GM12878 (cell line): ENCODE measurements at regions of chr6 and their contacts with region 1.

Region 1: DNA sequence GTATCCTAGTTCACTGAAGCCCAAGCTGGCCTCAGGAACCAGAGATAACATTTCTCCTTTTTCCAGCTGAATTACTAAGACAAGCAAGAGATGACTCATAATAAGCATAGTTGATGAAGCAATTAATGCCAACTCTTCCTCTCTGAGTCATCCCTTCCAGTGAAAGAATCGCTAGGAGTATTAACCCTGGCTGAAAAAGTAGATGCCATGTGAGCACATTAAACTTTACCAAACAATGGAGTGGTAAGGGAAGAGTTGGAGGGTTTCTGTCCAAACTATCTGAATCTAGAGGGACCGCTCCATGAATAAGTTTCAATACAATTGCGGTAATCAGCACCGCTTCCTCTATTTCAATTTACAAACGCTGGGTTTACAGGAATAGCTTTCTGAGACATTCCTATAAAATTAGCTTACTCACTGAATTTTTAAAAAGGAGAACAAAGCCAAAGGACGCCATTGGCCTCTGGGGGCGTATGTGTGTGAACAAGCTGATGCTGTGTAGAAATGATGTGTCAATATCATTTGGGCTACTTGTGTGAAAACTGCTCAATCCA is 48.3 kb downstream of the ATXN1 start:
- DNase-seq: no peak
- ATAC-seq: peak; percentile 71
- H3K4me3 ChIP-seq: no peak overlapping the region
- H3K27ac ChIP-seq: peak overlapping the region; percentile 40; the same call in 1 of the 2 replicates
- H3K4me1 ChIP-seq: peaks cover 18% of the 10 kb centered on the region
- H3K27me3 ChIP-seq: no peaks in the 10 kb centered on the region
- CTCF ChIP-seq: peak; percentile 25 to 56 (median 50)
- EP300 ChIP-seq: peak in 1 of 2 experiments; percentile 66; a peak in 1 of 4 replicates
- POLR2A ChIP-seq: no peak
- RAD21 ChIP-seq: peak; percentile 50

Region 2: DNA sequence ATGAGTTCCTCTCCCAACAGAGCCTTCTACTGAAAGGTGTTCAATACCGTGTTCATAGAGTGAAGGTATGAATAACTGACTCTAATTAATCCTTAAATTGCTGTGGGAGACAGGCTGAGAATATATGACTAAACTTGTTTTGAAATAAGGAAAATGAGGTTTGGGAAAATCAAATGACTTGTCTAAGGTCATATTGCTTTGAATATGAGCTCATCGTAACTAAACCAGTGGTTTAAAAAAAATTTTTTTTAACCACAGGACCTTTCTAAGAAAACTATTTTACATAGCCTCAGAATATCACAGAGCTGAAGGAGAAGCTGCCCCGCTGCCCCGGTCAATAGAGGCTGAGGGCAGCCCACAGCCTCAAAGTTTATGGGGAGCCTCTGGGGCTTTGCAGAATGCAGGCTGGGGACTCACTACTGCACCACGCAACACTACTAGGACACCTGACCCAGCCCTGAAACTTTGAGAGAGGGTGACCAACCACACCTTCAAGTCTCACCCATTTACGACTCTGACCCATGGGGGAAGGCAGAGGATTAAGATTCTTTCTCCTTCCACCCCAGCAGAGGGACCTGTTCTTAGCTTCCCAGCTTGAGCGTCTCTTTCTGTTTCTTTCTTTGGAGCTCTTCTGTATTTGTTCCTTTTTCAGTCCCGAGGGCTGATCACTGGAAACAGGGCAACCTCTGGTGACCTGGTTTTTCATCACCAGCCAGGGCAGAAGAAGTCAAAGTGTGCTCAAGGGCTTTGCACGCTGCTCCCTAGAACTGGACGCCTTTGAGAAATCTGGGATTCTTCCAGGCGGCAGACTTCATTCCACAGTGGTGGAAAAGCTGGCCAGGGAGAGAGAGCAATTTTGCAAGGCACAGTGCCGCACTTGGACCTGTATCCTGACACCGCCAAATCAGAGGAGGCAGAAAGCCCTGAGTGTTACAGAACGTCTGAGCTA is 171.9 kb before region 1 on chr6:
- CTCF ChIA-PET with region 1: no interaction called
- POLR2A ChIA-PET with region 1: no interaction called
- RAD21 ChIA-PET with region 1: interaction called, 10 read pairs
- SMC1A ChIA-PET with region 1: no interaction called
- in situ Hi-C with region 1: no loop called
- intact Hi-C with region 1: no loop called
- DNase-seq: no peak
- ATAC-seq: peak; percentile 93
- H3K4me3 ChIP-seq: no peak overlapping the region
- H3K27ac ChIP-seq: no peak overlapping the region
- H3K4me1 ChIP-seq: peaks cover 7% of the 10 kb centered on the region
- H3K27me3 ChIP-seq: no peaks in the 10 kb centered on the region
- CTCF ChIP-seq: peak; percentile 9 to 26 (median 13); a peak in 3 of 6 replicates
- EP300 ChIP-seq: peak in 1 of 2 experiments; percentile 44; a peak in 1 of 4 replicates
- POLR2A ChIP-seq: no peak
- RAD21 ChIP-seq: 0 out of 2 replicates have a peak, but pooled peaks have one; percentile 23

Region 3: DNA sequence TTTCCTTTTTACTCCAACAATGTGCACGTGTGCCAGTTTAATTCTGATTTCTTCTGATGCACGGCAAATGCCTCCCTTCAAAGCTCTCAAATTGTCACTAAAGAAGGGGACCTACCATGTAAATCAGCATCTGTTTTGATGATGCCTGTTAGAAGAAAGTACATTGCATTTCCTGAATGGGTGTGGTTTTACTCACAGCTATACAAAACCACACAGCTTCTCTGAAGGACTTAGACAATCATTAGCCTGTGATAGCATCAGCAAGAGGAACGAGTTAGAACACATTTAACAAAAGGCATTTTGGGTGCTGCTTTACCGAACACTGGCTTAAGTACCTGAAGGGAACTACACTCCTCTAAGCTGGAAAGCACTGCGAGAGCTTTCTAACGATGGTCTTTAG is 61.1 kb before region 1 on chr6:
- CTCF ChIA-PET with region 1: no interaction called
- POLR2A ChIA-PET with region 1: no interaction called
- RAD21 ChIA-PET with region 1: interaction called, 5 read pairs
- SMC1A ChIA-PET with region 1: interaction called, 3 read pairs
- in situ Hi-C with region 1: no loop called
- intact Hi-C with region 1: loop called (anchors 2 kb)
- DNase-seq: no peak
- ATAC-seq: peak; percentile 86
- H3K4me3 ChIP-seq: no peak overlapping the region
- H3K27ac ChIP-seq: no peak overlapping the region
- H3K4me1 ChIP-seq: peaks cover 18% of the 10 kb centered on the region
- H3K27me3 ChIP-seq: no peaks in the 10 kb centered on the region
- CTCF ChIP-seq: no peak
- EP300 ChIP-seq: no peak
- POLR2A ChIP-seq: no peak
- RAD21 ChIP-seq: no peak

Region 4: GRCh38 chr6:16723826-16724225 is 10.8 kb after region 1 on chr6:
- CTCF ChIA-PET with region 1: interaction called, 3 read pairs
- POLR2A ChIA-PET with region 1: interaction called, 4 read pairs
- RAD21 ChIA-PET with region 1: interaction called, 3 read pairs
- SMC1A ChIA-PET with region 1: interaction called, 28 read pairs
- in situ Hi-C with region 1: no loop called
- intact Hi-C with region 1: no loop called
- DNase-seq: no peak
- ATAC-seq: no peak
- H3K4me3 ChIP-seq: no peak overlapping the region
- H3K27ac ChIP-seq: no peak overlapping the region
- H3K4me1 ChIP-seq: no peaks in the 10 kb centered on the region; the same call in 1 of the 2 replicates
- H3K27me3 ChIP-seq: no peaks in the 10 kb centered on the region; a peak in 1 of 4 replicates
- CTCF ChIP-seq: no peak
- EP300 ChIP-seq: no peak
- POLR2A ChIP-seq: no peak
- RAD21 ChIP-seq: no peak

Region 5: DNA sequence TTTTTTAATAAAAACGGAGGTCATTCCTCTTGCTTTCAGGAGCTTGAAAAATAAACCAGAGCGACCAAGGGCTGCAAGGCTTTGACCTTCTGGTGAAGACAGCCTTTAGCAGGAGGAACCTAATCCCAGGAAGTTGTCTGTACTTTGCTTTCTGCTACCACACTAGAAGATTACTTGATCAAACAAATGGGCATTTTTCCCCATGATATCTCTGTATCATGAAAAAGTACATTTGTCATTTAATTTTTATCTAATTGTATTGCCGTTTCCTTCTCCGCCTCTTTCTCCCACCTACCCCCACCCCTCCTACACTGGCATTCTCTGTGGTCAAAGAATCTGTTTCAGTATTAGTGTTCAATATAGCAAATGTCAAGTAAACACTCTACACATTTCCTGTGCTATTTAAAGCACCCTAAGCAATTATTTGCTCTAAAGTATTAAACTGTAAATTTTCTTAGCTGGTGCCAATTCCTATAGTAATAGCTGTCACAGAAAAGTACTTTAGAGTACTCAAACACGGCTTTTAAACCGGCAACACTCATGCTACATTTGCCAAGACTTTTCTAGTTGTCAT is 18.6 kb after region 1 on chr6:
- CTCF ChIA-PET with region 1: interaction called, 12 read pairs
- POLR2A ChIA-PET with region 1: interaction called, 4 read pairs
- RAD21 ChIA-PET with region 1: interaction called, 6 read pairs
- SMC1A ChIA-PET with region 1: interaction called, 28 read pairs
- in situ Hi-C with region 1: no loop called
- intact Hi-C with region 1: no loop called
- DNase-seq: peak; percentile 61
- ATAC-seq: peak; percentile 95
- H3K4me3 ChIP-seq: peak overlapping the region; percentile 59; the same call in 1 of the 2 replicates
- H3K27ac ChIP-seq: peak overlapping the region; percentile 28; the same call in 1 of the 2 replicates
- H3K4me1 ChIP-seq: peaks cover 17% of the 10 kb centered on the region
- H3K27me3 ChIP-seq: no peaks in the 10 kb centered on the region
- CTCF ChIP-seq: no peak
- EP300 ChIP-seq: peak; percentile 86 to 89
- POLR2A ChIP-seq: no peak
- RAD21 ChIP-seq: no peak

Region 6: GRCh38 chr6:17289630-17290061 is 576.6 kb after region 1 on chr6:
- CTCF ChIA-PET with region 1: no interaction called
- POLR2A ChIA-PET with region 1: no interaction called
- RAD21 ChIA-PET with region 1: no interaction called
- SMC1A ChIA-PET with region 1: no interaction called
- in situ Hi-C with region 1: no loop called
- intact Hi-C with region 1: no loop called
- DNase-seq: no peak
- ATAC-seq: no peak
- H3K4me3 ChIP-seq: no peak overlapping the region
- H3K27ac ChIP-seq: no peak overlapping the region
- H3K4me1 ChIP-seq: no peaks in the 10 kb centered on the region
- H3K27me3 ChIP-seq: no peaks in the 10 kb centered on the region; a peak in 1 of 4 replicates
- CTCF ChIP-seq: no peak
- EP300 ChIP-seq: no peak
- POLR2A ChIP-seq: no peak
- RAD21 ChIP-seq: no peak